ENCODE measurements at regions of chr6 and their contacts with region 1.

Region 1: DNA sequence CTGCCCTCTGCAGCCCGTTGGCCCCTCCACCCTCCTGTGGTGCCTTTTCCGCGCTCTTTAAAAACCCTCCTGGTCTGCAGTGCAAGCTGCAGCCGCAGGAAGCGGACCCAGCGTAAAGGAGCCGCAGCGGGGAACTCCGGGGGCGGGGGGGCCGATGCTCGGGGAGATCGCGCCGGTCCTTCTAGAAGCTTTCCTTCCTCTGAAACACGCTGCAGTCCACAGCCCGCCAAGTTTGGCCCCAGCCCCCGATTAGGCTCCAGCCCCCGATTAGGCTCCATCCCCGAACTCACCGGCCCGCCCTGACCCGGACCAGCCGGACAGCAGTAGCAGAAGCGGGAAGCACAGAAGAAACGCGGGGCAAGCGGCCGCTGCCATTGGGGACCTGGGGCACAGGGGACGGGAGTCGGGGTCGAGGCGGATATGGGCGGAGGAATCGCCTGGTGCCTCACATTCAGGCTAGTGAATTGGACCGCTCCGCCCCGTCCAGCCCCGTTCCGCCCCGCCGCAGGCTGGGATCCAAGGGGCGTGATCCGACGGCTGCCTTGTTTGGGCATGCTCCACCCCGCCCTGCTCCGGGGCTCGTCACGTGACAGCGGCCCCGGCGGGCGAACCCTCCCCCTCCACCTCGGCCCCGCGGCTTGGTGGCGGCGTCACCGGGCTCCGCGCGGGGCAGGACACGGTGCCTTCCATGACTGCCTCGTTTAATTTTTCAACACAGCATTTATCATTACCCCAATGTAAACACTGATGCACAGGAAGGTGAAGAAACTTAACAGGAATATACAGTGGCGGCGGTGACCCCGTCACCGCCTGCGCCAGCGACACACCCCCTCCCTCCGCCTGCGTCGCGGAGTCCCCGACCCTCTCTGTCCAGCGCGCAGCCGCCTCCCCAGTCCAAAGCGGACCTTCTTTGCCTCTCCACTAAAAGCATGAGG is 20.3 kb downstream of the RAET1L start:
- DNase-seq: peak; percentile 95
- H3K4me3 ChIP-seq: peak overlapping the region; percentile 26 to 62 (median 46)
- H3K27ac ChIP-seq: peak overlapping the region in 1 of 4 donors; percentile 12
- H3K4me1 ChIP-seq: peaks cover 3 to 15% (median 8%) of the 10 kb centered on the region in 4 donors
- H3K27me3 ChIP-seq: peaks cover 89% of the 10 kb centered on the region
- CTCF ChIP-seq: peak in 2 of 5 experiments; percentile 11 to 33
- EP300 ChIP-seq: no peak
- POLR2A ChIP-seq: no peak

Region 2: GRCh38 chr6:149834513-149835481 is 170.3 kb before region 1 on chr6:
- in situ Hi-C with region 1: loop called in 2 of 4 experiments (anchors 25 kb)
- intact Hi-C with region 1: no loop called
- DNase-seq: peak; percentile 67
- H3K4me3 ChIP-seq: no peak overlapping the region
- H3K27ac ChIP-seq: no peak overlapping the region
- H3K4me1 ChIP-seq: peaks cover 0 to 4% (median 1%) of the 10 kb centered on the region in 4 donors
- H3K27me3 ChIP-seq: no peaks in the 10 kb centered on the region
- CTCF ChIP-seq: peak; percentile 89 to 95 (median 92)
- EP300 ChIP-seq: no peak
- POLR2A ChIP-seq: no peak

Region 3: GRCh38 chr6:150267686-150268561 is 262.9 kb after region 1 on chr6:
- in situ Hi-C with region 1: no loop called
- intact Hi-C with region 1: no loop called
- DNase-seq: no peak
- H3K4me3 ChIP-seq: no peak overlapping the region
- H3K27ac ChIP-seq: no peak overlapping the region
- H3K4me1 ChIP-seq: no peaks in the 10 kb centered on the region
- H3K27me3 ChIP-seq: no peaks in the 10 kb centered on the region
- CTCF ChIP-seq: no peak
- EP300 ChIP-seq: no peak
- POLR2A ChIP-seq: no peak

Measured in transverse colon (tissue), 4 donors.